ENCODE measurements at regions of chr9 and their contacts with region 1.

Region 1: GRCh38 chr9:84261082-84261746 is 79.3 kb downstream of the SLC28A3 start:
- DNase-seq: peak; percentile 66
- H3K4me3 ChIP-seq: no peak overlapping the region
- H3K27ac ChIP-seq: no peak overlapping the region
- H3K27me3 ChIP-seq: no peaks in the 10 kb centered on the region
- CTCF ChIP-seq: peak; percentile 93

Region 2: DNA sequence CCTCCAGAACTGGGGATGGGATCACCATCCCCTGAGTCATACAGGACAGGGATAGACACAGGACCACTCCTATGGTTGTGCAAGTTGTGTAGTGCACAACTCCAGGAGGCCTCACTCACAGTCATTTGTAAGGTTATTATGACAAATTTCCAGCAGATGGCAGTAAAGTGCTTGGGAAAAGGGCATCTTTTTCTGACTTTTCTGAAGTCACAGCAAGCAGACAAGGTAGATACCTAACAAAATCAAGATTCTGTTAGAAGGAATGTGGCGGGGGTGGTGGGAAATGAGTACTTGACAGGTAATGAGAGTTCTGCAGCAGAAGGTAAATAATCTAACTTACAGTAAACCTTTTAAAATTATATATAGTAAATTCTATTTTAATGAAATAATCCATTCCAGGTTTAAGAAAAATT is 323.3 kb before region 1 on chr9:
- in situ Hi-C with region 1: loop called (anchors 25 kb)
- DNase-seq: peak; percentile 35
- H3K4me3 ChIP-seq: no peak overlapping the region
- H3K27ac ChIP-seq: no peak overlapping the region
- H3K27me3 ChIP-seq: no peaks in the 10 kb centered on the region
- CTCF ChIP-seq: peak; percentile 61

Region 3: DNA sequence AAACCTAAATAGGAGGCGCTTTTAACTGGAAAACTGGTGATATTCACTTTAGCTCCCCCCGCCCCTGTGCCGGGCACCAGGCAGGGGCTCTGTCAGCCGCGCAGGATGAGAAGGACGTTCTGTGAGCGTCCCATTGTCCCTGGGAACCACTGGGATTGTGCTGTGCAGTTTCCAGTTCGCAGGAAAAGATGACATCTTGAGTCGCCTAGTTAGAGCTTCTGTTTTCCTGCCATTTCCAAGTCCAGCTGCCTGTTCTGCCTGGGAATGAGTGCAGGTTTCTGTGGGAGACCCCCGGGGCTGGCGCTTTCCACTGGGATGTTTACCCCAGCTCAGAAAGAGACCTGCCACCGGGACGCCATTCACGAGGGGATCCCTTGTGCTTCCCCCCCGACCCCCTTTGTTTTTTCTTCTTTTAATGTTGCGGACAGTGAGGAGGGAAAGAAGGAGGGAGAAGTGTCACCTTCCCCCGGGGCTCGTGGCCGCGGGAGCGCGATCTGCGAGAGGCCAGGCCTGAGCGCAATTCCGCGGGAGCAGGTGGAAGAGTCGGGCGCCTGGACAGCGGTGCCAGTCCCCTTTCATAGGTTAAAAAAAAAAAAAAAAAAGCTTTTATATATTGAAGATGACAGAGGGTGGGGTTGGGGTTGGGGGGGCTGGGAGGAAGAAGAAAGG is 159.1 kb before region 1 on chr9:
- in situ Hi-C with region 1: no loop called
- DNase-seq: no peak
- H3K4me3 ChIP-seq: no peak overlapping the region
- H3K27ac ChIP-seq: no peak overlapping the region
- H3K27me3 ChIP-seq: peaks cover 2% of the 10 kb centered on the region
- CTCF ChIP-seq: no peak

Region 4: DNA sequence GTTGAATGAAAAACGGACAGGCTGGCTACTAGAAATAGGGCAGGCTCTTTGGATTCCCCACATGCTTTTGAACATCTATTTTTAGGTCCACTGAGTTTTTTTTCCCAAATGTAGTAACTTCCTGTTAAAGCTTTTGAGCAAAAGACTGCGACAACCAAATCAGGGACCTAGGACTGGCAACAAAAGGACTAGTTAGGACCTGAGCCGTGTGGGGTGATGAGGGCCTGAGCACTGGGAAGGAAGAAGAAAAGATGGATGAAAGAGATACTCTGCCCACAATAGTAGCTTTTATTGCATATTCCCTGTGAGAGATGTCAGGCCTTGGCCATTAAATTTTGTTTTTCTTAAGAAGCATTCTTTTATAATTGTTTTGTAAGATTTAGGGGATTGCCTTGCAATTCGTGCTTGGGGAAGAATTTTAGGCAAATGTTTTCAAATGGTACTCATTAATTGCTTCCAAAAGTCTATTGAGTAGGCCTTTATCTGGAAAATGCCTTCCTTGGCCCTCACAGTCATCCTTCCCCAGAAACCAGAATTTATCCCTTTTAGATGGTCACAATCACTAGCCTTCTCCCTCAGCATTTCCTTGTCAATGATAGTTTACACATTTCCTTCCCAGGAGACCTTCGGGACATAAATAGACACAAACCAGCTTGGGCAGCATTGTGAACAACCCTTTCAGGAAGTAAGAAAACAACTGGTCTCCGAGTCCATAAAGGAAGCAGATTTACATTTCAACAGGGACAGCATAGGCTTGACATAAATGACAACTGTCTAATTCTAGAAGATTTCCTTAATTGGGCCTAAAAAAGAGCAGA is 114.1 kb before region 1 on chr9:
- in situ Hi-C with region 1: no loop called
- DNase-seq: no peak
- H3K4me3 ChIP-seq: no peak overlapping the region
- H3K27ac ChIP-seq: no peak overlapping the region
- H3K27me3 ChIP-seq: no peaks in the 10 kb centered on the region
- CTCF ChIP-seq: no peak

Region 5: DNA sequence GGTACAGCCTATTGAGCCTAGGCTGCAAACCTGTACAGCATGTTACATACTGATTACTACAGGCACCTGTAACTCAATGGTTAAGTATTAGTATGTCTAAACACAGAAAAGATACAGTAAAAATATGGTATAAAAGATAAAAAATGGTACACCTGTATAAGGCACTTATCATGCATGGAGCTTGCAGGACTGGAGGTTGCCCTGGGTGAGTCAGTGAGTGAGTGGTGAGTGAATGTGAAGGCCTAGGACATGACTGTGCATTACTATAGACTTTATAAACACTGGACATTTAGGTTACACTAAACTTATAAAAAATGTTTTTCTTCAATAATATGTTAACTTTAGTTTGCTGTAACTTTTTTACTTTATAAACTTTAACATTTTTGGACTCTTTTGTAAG is 92.0 kb before region 1 on chr9:
- in situ Hi-C with region 1: no loop called
- DNase-seq: peak; percentile 61
- H3K4me3 ChIP-seq: no peak overlapping the region
- H3K27ac ChIP-seq: no peak overlapping the region
- H3K27me3 ChIP-seq: no peaks in the 10 kb centered on the region
- CTCF ChIP-seq: no peak

Measured in brain microvascular endothelial cell (primary cell).